Naive thymus-derived CD4-positive, alpha-beta T cell (primary cell): ENCODE measurements at regions of chr2 and their contacts with region 1.

Region 1: GRCh38 chr2:95115418-95115817 is 6.2 kb downstream of the MRPS5 start:
- DNase-seq: peak; percentile 41 to 78 (median 72)
- ATAC-seq: peak; percentile 98
- H3K4me3 ChIP-seq: no peak overlapping the region
- H3K4me3 Mint-ChIP-seq: no peak overlapping the region
- H3K27ac ChIP-seq: no peak overlapping the region
- H3K27ac Mint-ChIP-seq: peak overlapping the region in 5 of 9 donors; percentile 18 to 76 (median 52)
- H3K4me1 ChIP-seq: peaks cover 16 to 29% of the 10 kb centered on the region in 2 donors
- H3K4me1 Mint-ChIP-seq: peaks cover 37 to 50% (median 43%) of the 10 kb centered on the region in 7 donors
- H3K27me3 ChIP-seq: no peaks in the 10 kb centered on the region
- H3K27me3 Mint-ChIP-seq: no peaks in the 10 kb centered on the region

Region 2: GRCh38 chr2:94874277-94875008 is 241.0 kb before region 1 on chr2:
- CTCF ChIA-PET with region 1: no interaction called
- POLR2A ChIA-PET with region 1: no interaction called
- intact Hi-C with region 1: loop called in 1 of 2 experiments (anchors 2 kb)
- DNase-seq: peak in 8 of 9 donors; percentile 24 to 76 (median 50)
- ATAC-seq: peak; percentile 84
- H3K4me3 ChIP-seq: no peak overlapping the region
- H3K4me3 Mint-ChIP-seq: no peak overlapping the region
- H3K27ac ChIP-seq: no peak overlapping the region
- H3K27ac Mint-ChIP-seq: peak overlapping the region in 1 of 9 donors; percentile 48
- H3K4me1 ChIP-seq: no peaks in the 10 kb centered on the region
- H3K4me1 Mint-ChIP-seq: no peaks in the 10 kb centered on the region
- H3K27me3 ChIP-seq: no peaks in the 10 kb centered on the region
- H3K27me3 Mint-ChIP-seq: peaks cover 0 to 26% (median 4%) of the 10 kb centered on the region in 5 donors

Region 3: GRCh38 chr2:94986392-94986963 is 128.9 kb before region 1 on chr2:
- CTCF ChIA-PET with region 1: interaction called, 3 read pairs
- POLR2A ChIA-PET with region 1: no interaction called
- intact Hi-C with region 1: loop called (anchors 1 kb)
- DNase-seq: peak in 6 of 9 donors; percentile 20 to 50 (median 28)
- ATAC-seq: no peak
- H3K4me3 ChIP-seq: no peak overlapping the region
- H3K4me3 Mint-ChIP-seq: no peak overlapping the region
- H3K27ac ChIP-seq: no peak overlapping the region
- H3K27ac Mint-ChIP-seq: no peak overlapping the region
- H3K4me1 ChIP-seq: no peaks in the 10 kb centered on the region
- H3K4me1 Mint-ChIP-seq: peaks cover 0 to 6% (median 0%) of the 10 kb centered on the region in 7 donors
- H3K27me3 ChIP-seq: no peaks in the 10 kb centered on the region
- H3K27me3 Mint-ChIP-seq: peaks cover 11 to 26% (median 20%) of the 10 kb centered on the region in 5 donors

Region 4: GRCh38 chr2:95053543-95053942 is 61.9 kb before region 1 on chr2:
- CTCF ChIA-PET with region 1: interaction called, 12 read pairs
- POLR2A ChIA-PET with region 1: interaction called, 3 read pairs
- intact Hi-C with region 1: no loop called
- DNase-seq: peak in 1 of 9 donors; percentile 42
- ATAC-seq: no peak
- H3K4me3 ChIP-seq: no peak overlapping the region
- H3K4me3 Mint-ChIP-seq: peak overlapping the region; percentile 2 to 78 (median 49)
- H3K27ac ChIP-seq: peak overlapping the region; percentile 62
- H3K27ac Mint-ChIP-seq: peak overlapping the region; percentile 76 to 98 (median 90)
- H3K4me1 ChIP-seq: peaks cover 0 to 70% of the 10 kb centered on the region in 2 donors
- H3K4me1 Mint-ChIP-seq: peaks cover 29 to 94% (median 87%) of the 10 kb centered on the region in 7 donors
- H3K27me3 ChIP-seq: no peaks in the 10 kb centered on the region
- H3K27me3 Mint-ChIP-seq: no peaks in the 10 kb centered on the region

Region 5: DNA sequence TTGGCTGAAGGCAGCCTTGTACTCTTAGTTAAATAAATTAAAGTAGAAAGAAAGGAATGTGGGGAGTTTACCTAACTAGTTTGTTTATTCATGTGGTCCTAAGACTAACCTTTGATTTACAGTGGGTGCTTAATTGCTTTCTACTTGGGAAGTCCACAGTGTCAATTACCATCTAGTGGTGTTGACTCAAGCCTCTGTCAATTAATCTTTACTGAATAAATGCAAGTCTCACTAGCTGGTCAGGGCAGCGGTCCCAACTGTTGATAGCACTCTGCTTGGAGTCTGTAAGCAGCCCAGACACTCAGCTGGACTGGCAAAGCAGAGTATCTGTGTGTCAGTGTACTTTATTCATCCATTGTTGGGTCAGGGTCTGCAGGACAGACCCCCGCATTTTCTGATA is 28.4 kb after region 1 on chr2:
- CTCF ChIA-PET with region 1: no interaction called
- POLR2A ChIA-PET with region 1: no interaction called
- intact Hi-C with region 1: no loop called
- DNase-seq: no peak
- ATAC-seq: no peak
- H3K4me3 ChIP-seq: no peak overlapping the region
- H3K4me3 Mint-ChIP-seq: no peak overlapping the region
- H3K27ac ChIP-seq: no peak overlapping the region
- H3K27ac Mint-ChIP-seq: no peak overlapping the region
- H3K4me1 ChIP-seq: no peaks in the 10 kb centered on the region
- H3K4me1 Mint-ChIP-seq: peaks cover 0 to 4% (median 0%) of the 10 kb centered on the region in 7 donors
- H3K27me3 ChIP-seq: no peaks in the 10 kb centered on the region
- H3K27me3 Mint-ChIP-seq: no peaks in the 10 kb centered on the region